HepG2 (cell line): ENCODE measurements at regions of chr15 and their contacts with region 1.

Region 1: GRCh38 chr15:48352474-48353072 is 21.3 kb downstream of the DUT start:
- DNase-seq: peak; percentile 72
- ATAC-seq: peak; percentile 80
- H3K4me3 ChIP-seq: no peak overlapping the region
- H3K27ac ChIP-seq: no peak overlapping the region
- H3K4me1 ChIP-seq: peaks cover 19% of the 10 kb centered on the region
- H3K27me3 ChIP-seq: no peaks in the 10 kb centered on the region
- CTCF ChIP-seq: peak; percentile 81
- EP300 ChIP-seq: no peak
- POLR2A ChIP-seq: no peak
- RAD21 ChIP-seq: peak; percentile 51

Region 2: GRCh38 chr15:48006041-48006511 is 346.5 kb before region 1 on chr15:
- CTCF ChIA-PET with region 1: no interaction called
- POLR2A ChIA-PET with region 1: no interaction called
- in situ Hi-C with region 1: no loop called
- intact Hi-C with region 1: no loop called
- DNase-seq: no peak
- ATAC-seq: no peak
- H3K4me3 ChIP-seq: no peak overlapping the region
- H3K27ac ChIP-seq: no peak overlapping the region
- H3K4me1 ChIP-seq: no peaks in the 10 kb centered on the region
- H3K27me3 ChIP-seq: no peaks in the 10 kb centered on the region
- CTCF ChIP-seq: no peak
- EP300 ChIP-seq: no peak
- POLR2A ChIP-seq: no peak
- RAD21 ChIP-seq: no peak

Region 3: GRCh38 chr15:48112242-48112641 is 240.3 kb before region 1 on chr15:
- CTCF ChIA-PET with region 1: no interaction called
- POLR2A ChIA-PET with region 1: no interaction called
- in situ Hi-C with region 1: no loop called
- intact Hi-C with region 1: loop called (anchors 5 kb)
- DNase-seq: peak; percentile 16
- ATAC-seq: peak; percentile 93
- H3K4me3 ChIP-seq: no peak overlapping the region
- H3K27ac ChIP-seq: no peak overlapping the region
- H3K4me1 ChIP-seq: no peaks in the 10 kb centered on the region
- H3K27me3 ChIP-seq: no peaks in the 10 kb centered on the region
- CTCF ChIP-seq: peak; percentile 72
- EP300 ChIP-seq: no peak
- POLR2A ChIP-seq: no peak
- RAD21 ChIP-seq: no peak

Region 4: GRCh38 chr15:48330855-48331795 is 21.4 kb before region 1 on chr15 and contains the start of gene DUT:
- CTCF ChIA-PET with region 1: interaction called, 9 read pairs
- POLR2A ChIA-PET with region 1: interaction called, 3 read pairs
- in situ Hi-C with region 1: no loop called
- intact Hi-C with region 1: loop called (anchors 2 kb)
- DNase-seq: peak; percentile 40
- ATAC-seq: peak; percentile 96
- H3K4me3 ChIP-seq: peak within 1 kb of the TSS; percentile 77 to 86 (median 78)
- H3K27ac ChIP-seq: peak within 1 kb of the TSS; percentile 71
- H3K4me1 ChIP-seq: peaks cover 38% of the 10 kb centered on the region
- H3K27me3 ChIP-seq: no peaks in the 10 kb centered on the region; a peak in 1 of 5 replicates
- CTCF ChIP-seq: 0 out of 2 replicates have a peak, but pooled peaks have one; percentile 4
- EP300 ChIP-seq: 0 out of 4 replicates have a peak, but pooled peaks of 1 of the 2 experiments have one; percentile 20
- POLR2A ChIP-seq: peak; percentile 74 to 91
- RAD21 ChIP-seq: no peak
- total RNA-seq, gene DUT: 131 and 133 TPM in 2 replicates

Region 5: GRCh38 chr15:48336940-48337339 is 15.6 kb before region 1 on chr15:
- CTCF ChIA-PET with region 1: interaction called, 9 read pairs
- POLR2A ChIA-PET with region 1: interaction called, 3 read pairs
- in situ Hi-C with region 1: no loop called
- intact Hi-C with region 1: loop called (anchors 1 kb)
- DNase-seq: peak; percentile 36
- ATAC-seq: peak; percentile 72
- H3K4me3 ChIP-seq: no peak overlapping the region
- H3K27ac ChIP-seq: no peak overlapping the region
- H3K4me1 ChIP-seq: peaks cover 28% of the 10 kb centered on the region
- H3K27me3 ChIP-seq: no peaks in the 10 kb centered on the region
- CTCF ChIP-seq: peak; percentile 72
- EP300 ChIP-seq: no peak
- POLR2A ChIP-seq: no peak
- RAD21 ChIP-seq: no peak

Region 6: DNA sequence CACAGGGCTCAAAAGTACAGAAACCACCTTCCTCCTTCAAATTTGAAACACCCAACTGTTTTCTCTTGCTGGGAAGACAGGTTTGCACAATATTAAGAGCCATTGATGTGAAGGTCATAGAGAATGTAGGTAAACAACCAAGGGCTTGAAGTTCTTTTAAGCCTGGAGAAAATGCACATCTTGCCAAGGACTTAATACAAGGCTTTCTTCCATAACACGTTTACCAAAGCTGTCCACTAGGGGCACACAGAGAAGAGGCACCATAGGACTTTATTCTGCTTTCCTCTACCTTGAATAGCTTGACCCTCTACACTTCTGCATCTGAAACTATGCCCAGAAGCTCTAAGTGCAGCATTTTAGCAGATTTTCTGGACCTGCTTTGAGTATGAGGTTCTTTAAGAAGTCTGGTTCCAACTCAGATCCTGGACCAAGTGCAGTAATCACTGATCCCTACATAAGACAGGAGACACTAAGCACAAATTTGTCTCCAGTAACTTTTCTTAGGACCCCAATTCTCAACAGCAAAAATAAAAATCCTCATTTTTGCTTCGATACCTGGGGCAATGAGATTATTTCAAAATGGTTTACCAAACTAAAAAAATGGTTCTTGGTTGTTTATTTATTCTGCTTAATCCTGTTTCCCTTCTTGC is 155.0 kb after region 1 on chr15:
- CTCF ChIA-PET with region 1: no interaction called
- POLR2A ChIA-PET with region 1: no interaction called
- in situ Hi-C with region 1: loop called (anchors 10 kb)
- intact Hi-C with region 1: no loop called
- DNase-seq: peak; percentile 43
- ATAC-seq: peak; percentile 93
- H3K4me3 ChIP-seq: no peak overlapping the region
- H3K27ac ChIP-seq: no peak overlapping the region
- H3K4me1 ChIP-seq: peaks cover 11% of the 10 kb centered on the region
- H3K27me3 ChIP-seq: no peaks in the 10 kb centered on the region
- CTCF ChIP-seq: peak; percentile 58
- EP300 ChIP-seq: peak in 1 of 2 experiments; percentile 13; a peak in 1 of 4 replicates
- POLR2A ChIP-seq: no peak
- RAD21 ChIP-seq: no peak

Region 7: DNA sequence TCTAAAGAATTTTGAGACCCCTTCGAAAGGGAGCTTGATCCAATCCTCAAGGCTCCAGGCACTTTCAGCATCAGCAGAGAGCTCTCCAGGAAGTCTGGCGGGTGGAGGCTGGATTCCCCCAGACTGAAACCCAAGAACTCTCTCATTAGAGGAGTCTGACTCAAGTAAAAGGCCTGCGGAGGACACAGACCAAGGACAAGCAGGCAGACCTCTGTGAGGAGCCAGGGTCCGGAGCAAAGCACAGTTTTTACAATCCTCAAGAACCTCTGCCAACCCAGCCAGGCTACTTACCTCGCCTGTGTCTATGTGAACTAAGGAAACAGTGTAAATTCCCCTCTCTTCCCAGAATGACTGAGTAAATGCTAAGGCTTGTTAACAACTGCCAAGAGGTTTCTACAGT is 206.7 kb after region 1 on chr15:
- CTCF ChIA-PET with region 1: no interaction called
- POLR2A ChIA-PET with region 1: no interaction called
- in situ Hi-C with region 1: no loop called
- intact Hi-C with region 1: no loop called
- DNase-seq: no peak
- ATAC-seq: no peak
- H3K4me3 ChIP-seq: no peak overlapping the region
- H3K27ac ChIP-seq: no peak overlapping the region
- H3K4me1 ChIP-seq: no peaks in the 10 kb centered on the region
- H3K27me3 ChIP-seq: no peaks in the 10 kb centered on the region
- CTCF ChIP-seq: no peak
- EP300 ChIP-seq: no peak
- POLR2A ChIP-seq: no peak
- RAD21 ChIP-seq: no peak

Region 8: DNA sequence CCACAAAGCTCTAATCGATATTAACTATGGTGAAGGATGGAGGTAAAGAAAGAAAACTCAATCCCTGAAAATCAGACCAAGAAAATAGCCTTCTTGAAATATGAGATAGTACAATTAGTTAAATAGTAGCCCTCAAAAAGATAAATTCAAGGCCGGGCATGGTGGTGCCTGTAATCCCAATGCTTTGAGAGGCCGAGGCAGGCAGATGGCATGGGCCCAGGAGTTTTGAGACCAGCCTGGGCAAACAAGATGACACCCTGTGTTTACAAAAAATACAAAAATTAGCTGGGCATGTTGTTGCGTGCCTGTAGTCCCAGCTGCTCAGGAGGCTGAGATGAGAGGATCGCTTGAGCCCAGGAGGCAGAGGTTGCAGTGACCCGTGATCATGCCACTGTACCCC is 489.9 kb after region 1 on chr15:
- CTCF ChIA-PET with region 1: no interaction called
- POLR2A ChIA-PET with region 1: no interaction called
- in situ Hi-C with region 1: loop called (anchors 25 kb)
- intact Hi-C with region 1: no loop called
- DNase-seq: no peak
- ATAC-seq: no peak
- H3K4me3 ChIP-seq: no peak overlapping the region
- H3K27ac ChIP-seq: no peak overlapping the region
- H3K4me1 ChIP-seq: no peaks in the 10 kb centered on the region
- H3K27me3 ChIP-seq: no peaks in the 10 kb centered on the region
- CTCF ChIP-seq: no peak
- EP300 ChIP-seq: no peak
- POLR2A ChIP-seq: no peak
- RAD21 ChIP-seq: no peak